ENCODE measurements at regions of chr2 and their contacts with region 1.

Region 1: GRCh38 chr2:65164426-65164891 is 34.6 kb upstream of the RAB1A start:
- DNase-seq: peak in 2 of 3 donors; percentile 50 to 58
- H3K4me3 ChIP-seq: no peak overlapping the region
- H3K27ac ChIP-seq: peak overlapping the region in 1 of 2 experiments; percentile 20
- H3K4me1 ChIP-seq: peaks cover 19 to 58% (median 48%) of the 10 kb centered on the region in 4 experiments
- H3K27me3 ChIP-seq: no peaks in the 10 kb centered on the region

Region 2: DNA sequence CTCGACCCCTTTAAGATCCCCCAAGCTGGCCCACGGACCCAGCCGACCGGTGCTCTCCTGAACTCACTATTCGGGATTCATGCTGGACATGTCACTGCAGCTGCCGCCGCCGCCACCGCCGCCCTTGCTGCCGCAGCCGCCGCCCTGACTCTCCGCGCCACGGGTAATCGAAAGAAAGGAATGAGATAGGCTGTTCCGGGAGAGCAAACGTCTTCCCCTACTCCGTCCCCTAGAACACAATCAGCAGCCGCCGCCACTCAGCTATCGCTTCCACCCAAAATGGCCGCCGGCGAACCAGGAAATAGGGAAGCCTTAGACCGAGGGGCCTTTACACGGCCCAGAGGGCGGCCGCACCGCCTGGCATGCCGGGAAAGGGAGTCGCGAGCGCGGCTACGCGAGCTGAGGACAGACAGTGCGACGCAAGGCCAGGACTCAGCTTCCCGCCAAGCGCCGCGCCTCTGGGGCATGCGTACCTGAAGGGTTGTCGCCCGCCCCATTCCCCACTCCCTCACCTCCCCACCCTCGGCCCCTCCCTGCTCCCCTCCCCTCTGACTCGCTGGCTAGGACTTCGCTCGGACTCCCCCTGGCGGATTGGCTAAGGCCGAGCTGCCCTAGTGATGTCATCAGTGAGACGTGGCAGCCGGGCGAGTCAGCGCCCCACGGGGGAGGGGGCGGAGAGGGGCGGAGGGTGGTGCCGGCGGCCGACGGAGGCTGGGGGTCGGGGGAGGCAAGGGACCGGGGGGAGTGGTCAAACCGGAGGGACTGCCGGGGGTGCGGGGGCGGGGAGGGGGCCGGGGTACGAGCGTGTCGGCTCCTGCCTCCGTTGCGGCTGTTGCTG is 34.4 kb before region 1 on chr2 and contains the start of gene RAB1A:
- CTCF ChIA-PET with region 1: interaction called, 14 read pairs
- POLR2A ChIA-PET with region 1: interaction called, 7 read pairs
- DNase-seq: peak; percentile 100
- H3K4me3 ChIP-seq: peak within 1 kb of the TSS; percentile 94 to 100 (median 97)
- H3K27ac ChIP-seq: peak within 1 kb of the TSS; percentile 94 to 98
- H3K4me1 ChIP-seq: peaks cover 10 to 40% (median 24%) of the 10 kb centered on the region in 4 experiments
- H3K27me3 ChIP-seq: no peaks in the 10 kb centered on the region